ENCODE measurements at regions of chr1 and their contacts with region 1.

Region 1: GRCh38 chr1:232880354-232880753 is 70.1 kb upstream of the NTPCR start:
- DNase-seq: peak in 1 of 2 experiments; percentile 46
- H3K4me3 ChIP-seq: no peak overlapping the region
- H3K4me3 Mint-ChIP-seq: no peak overlapping the region
- H3K27ac Mint-ChIP-seq: no peak overlapping the region
- H3K4me1 ChIP-seq: no peaks in the 10 kb centered on the region
- H3K4me1 Mint-ChIP-seq: no peaks in the 10 kb centered on the region
- H3K27me3 ChIP-seq: no peaks in the 10 kb centered on the region
- H3K27me3 Mint-ChIP-seq: no peaks in the 10 kb centered on the region
- CTCF ChIP-seq: peak; percentile 39 to 55

Region 2: GRCh38 chr1:232635778-232636356 is 244.5 kb before region 1 on chr1:
- CTCF ChIA-PET with region 1: no interaction called
- POLR2A ChIA-PET with region 1: no interaction called
- intact Hi-C with region 1: loop called (anchors 5 kb)
- DNase-seq: peak in 1 of 2 experiments; percentile 23
- H3K4me3 ChIP-seq: no peak overlapping the region
- H3K4me3 Mint-ChIP-seq: no peak overlapping the region
- H3K27ac Mint-ChIP-seq: no peak overlapping the region
- H3K4me1 ChIP-seq: peaks cover 5% of the 10 kb centered on the region; the same call in 1 of the 2 replicates
- H3K4me1 Mint-ChIP-seq: no peaks in the 10 kb centered on the region
- H3K27me3 ChIP-seq: no peaks in the 10 kb centered on the region; the same call in 1 of the 2 replicates
- H3K27me3 Mint-ChIP-seq: no peaks in the 10 kb centered on the region
- CTCF ChIP-seq: peak; percentile 63 to 65